ENCODE measurements at regions of chr15 and their contacts with region 1.

Region 1: GRCh38 chr15:49731187-49732099 is 110.6 kb downstream of the DTWD1 start:
- DNase-seq: no peak
- H3K4me3 ChIP-seq: no peak overlapping the region
- H3K27ac ChIP-seq: no peak overlapping the region
- H3K27me3 ChIP-seq: no peaks in the 10 kb centered on the region
- CTCF ChIP-seq: no peak

Region 2: GRCh38 chr15:49793943-49794342 is 62.5 kb after region 1 on chr15:
- intact Hi-C with region 1: loop called in 1 of 2 experiments (anchors 10 kb)
- DNase-seq: no peak
- H3K4me3 ChIP-seq: no peak overlapping the region
- H3K27ac ChIP-seq: no peak overlapping the region
- H3K27me3 ChIP-seq: no peaks in the 10 kb centered on the region
- CTCF ChIP-seq: no peak

Measured in dorsolateral prefrontal cortex (tissue), 120 donors.